Endothelial cell of umbilical vein (primary cell): ENCODE measurements at regions of chr2 and their contacts with region 1.

Region 1: GRCh38 chr2:65227425-65228262 is at the start of gene ACTR2:
- DNase-seq: peak; percentile 97
- H3K4me3 ChIP-seq: peak within 1 kb of the TSS; percentile 67 to 90 (median 74)
- H3K27ac ChIP-seq: peak within 1 kb of the TSS; percentile 80
- H3K4me1 ChIP-seq: peaks cover 31% of the 10 kb centered on the region
- H3K27me3 ChIP-seq: no peaks in the 10 kb centered on the region
- CTCF ChIP-seq: no peak
- POLR2A ChIP-seq: peak; percentile 87
- total RNA-seq, gene ACTR2: 287 and 301 TPM in 2 replicates

Region 2: GRCh38 chr2:65056215-65057053 is 171.2 kb before region 1 on chr2 and contains the start of gene CEP68:
- CTCF ChIA-PET with region 1: no interaction called
- POLR2A ChIA-PET with region 1: no interaction called
- dilution Hi-C with region 1: no loop called
- intact Hi-C with region 1: loop called (anchors 5 kb)
- DNase-seq: peak; percentile 99
- H3K4me3 ChIP-seq: peak within 1 kb of the TSS; percentile 74 to 96 (median 78)
- H3K27ac ChIP-seq: peak within 1 kb of the TSS; percentile 81
- H3K4me1 ChIP-seq: peaks cover 33% of the 10 kb centered on the region
- H3K27me3 ChIP-seq: no peaks in the 10 kb centered on the region
- CTCF ChIP-seq: no peak
- POLR2A ChIP-seq: peak; percentile 95
- total RNA-seq, gene CEP68: 20.0 and 21.4 TPM in 2 replicates

Region 3: DNA sequence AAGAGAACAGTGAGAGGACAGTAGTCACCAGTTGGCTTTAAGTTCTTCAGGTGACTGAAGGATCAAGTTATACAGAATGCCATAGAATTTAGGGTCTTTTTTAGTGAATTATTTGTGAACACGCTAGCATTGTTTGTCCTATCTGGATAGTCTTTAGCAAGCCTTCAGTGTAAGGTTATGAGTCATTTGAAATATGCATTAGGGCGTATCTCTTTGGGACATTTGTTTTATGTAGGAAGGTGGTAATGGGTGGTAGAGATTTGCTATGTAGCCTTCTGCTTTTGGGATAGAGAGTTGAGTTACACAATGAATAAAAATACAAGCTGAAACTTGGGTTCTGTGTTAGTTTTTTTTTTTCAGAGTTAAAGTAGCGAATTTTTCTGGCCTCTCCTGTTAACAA is 13.0 kb after region 1 on chr2:
- CTCF ChIA-PET with region 1: no interaction called
- POLR2A ChIA-PET with region 1: no interaction called
- dilution Hi-C with region 1: no loop called
- intact Hi-C with region 1: loop called (anchors 1 kb)
- DNase-seq: no peak
- H3K4me3 ChIP-seq: no peak overlapping the region
- H3K27ac ChIP-seq: no peak overlapping the region
- H3K4me1 ChIP-seq: no peaks in the 10 kb centered on the region
- H3K27me3 ChIP-seq: no peaks in the 10 kb centered on the region
- CTCF ChIP-seq: no peak
- POLR2A ChIP-seq: no peak